ENCODE measurements at regions of chr13 and their contacts with region 1.

Region 1: GRCh38 chr13:45417790-45418534 is at the start of gene SLC25A30:
- DNase-seq: peak; percentile 86
- ATAC-seq: peak; percentile 91
- H3K4me3 ChIP-seq: peak within 1 kb of the TSS; percentile 78
- H3K27ac ChIP-seq: peak within 1 kb of the TSS; percentile 47
- H3K4me1 ChIP-seq: peaks cover 12% of the 10 kb centered on the region; the same call in 1 of the 2 replicates
- H3K27me3 ChIP-seq: no peaks in the 10 kb centered on the region
- CTCF ChIP-seq: no peak
- total RNA-seq, gene SLC25A30: 8.0 and 19.5 TPM in 2 replicates

Region 2: DNA sequence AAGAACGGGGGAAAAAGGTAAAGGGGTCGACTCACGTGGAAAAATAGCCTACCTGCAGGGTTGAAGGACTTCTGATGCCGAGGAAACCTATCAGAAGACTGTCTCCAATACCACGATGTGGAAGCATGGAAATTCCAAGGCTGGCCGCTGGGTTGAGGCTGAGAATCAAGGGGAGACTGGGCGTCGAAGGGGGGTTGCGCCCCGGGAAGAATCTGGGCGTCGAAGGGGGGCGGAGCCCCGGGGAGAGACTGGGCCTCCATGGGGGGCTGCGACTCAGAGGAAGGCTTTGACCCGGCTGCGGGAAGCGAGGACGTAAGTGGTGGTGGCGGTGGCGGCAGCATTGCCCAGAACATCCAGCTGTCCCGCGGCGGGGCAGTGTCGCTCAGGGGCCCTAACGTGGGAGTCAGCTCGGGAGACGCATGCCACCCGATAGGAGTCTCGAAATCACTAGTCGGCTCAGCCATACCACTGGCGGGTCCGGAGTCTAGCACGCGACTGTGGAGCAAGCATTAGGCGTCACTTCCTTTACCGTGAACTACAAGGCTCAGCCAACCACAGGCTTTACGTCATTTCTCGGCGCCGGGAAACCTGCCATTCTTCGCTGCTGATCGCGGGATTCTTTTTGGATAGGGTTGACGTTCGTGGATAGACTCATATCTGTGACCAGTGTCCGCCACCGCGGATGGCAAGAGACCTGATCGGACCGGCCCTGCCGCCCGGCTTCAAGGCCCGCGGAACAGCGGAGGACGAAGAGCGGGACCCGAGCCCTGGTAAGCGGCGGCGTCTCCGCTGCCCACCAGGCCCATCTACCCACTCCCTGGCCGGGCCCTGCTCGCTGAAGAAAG is 428.8 kb before region 1 on chr13 and contains the starts of genes GPALPP1 and NUFIP1:
- CTCF ChIA-PET with region 1: interaction called, 17 read pairs
- POLR2A ChIA-PET with region 1: no interaction called
- intact Hi-C with region 1: no loop called
- DNase-seq: peak; percentile 91
- ATAC-seq: peak; percentile 89
- H3K4me3 ChIP-seq: peak within 1 kb of the TSS; percentile 100
- H3K27ac ChIP-seq: peak within 1 kb of the TSS; percentile 53
- H3K4me1 ChIP-seq: peaks cover 12% of the 10 kb centered on the region
- H3K27me3 ChIP-seq: no peaks in the 10 kb centered on the region
- CTCF ChIP-seq: no peak
- total RNA-seq, gene GPALPP1: 5.0 and 17.0 TPM in 2 replicates
- total RNA-seq, gene NUFIP1: 2.5 and 4.0 TPM in 2 replicates

Region 3: GRCh38 chr13:45332036-45332830 is 85.7 kb before region 1 on chr13:
- CTCF ChIA-PET with region 1: no interaction called
- POLR2A ChIA-PET with region 1: interaction called, 20 read pairs
- intact Hi-C with region 1: no loop called
- DNase-seq: peak; percentile 76
- ATAC-seq: peak; percentile 58
- H3K4me3 ChIP-seq: no peak overlapping the region
- H3K27ac ChIP-seq: peak overlapping the region; percentile 71
- H3K4me1 ChIP-seq: peaks cover 58% of the 10 kb centered on the region
- H3K27me3 ChIP-seq: no peaks in the 10 kb centered on the region
- CTCF ChIP-seq: no peak

Region 4: DNA sequence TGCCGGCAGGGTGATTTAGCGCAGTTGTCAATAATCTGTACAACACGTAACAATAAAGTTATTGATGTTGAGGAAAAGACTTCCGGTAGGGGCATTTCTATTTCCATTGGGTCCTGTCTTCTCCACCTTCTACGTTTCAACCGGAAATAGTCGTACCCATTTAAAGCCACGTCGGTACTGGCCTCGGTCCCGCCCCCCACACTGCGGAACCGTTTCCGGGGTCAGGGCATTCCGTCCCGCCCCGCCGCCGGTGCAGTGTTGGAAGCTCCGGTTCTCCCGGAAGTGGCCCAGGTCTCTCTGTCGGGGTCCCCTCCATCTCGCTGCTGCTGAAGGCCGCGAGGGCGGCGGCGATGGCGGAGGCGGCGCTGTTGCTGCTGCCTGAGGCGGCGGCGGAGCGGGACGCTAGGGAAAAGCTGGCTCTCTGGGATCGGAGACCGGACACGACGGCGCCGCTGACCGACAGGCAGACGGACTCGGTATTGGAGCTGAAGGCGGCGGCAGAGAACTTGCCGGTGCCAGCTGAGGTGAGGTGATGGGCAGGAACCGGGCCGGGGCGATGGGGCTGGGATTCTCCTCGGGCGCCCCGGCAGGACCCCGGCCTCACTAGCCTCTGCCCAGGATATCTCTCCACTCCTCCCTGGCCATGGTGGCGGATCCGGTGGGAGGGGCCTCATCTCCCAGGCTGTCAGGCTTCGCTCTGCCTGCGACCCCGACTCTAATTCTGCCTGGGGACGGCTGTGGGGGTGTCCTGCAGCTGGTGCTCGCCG is 46.9 kb after region 1 on chr13 and contains the start of gene COG3:
- CTCF ChIA-PET with region 1: no interaction called
- POLR2A ChIA-PET with region 1: no interaction called
- intact Hi-C with region 1: loop called (anchors 2 kb)
- DNase-seq: peak; percentile 93
- ATAC-seq: peak; percentile 94
- H3K4me3 ChIP-seq: peak within 1 kb of the TSS; percentile 98
- H3K27ac ChIP-seq: peak within 1 kb of the TSS; percentile 82
- H3K4me1 ChIP-seq: peaks cover 10% of the 10 kb centered on the region
- H3K27me3 ChIP-seq: no peaks in the 10 kb centered on the region
- CTCF ChIP-seq: 0 out of 2 replicates have a peak, but pooled peaks have one; percentile 11
- total RNA-seq, gene COG3: 28.8 and 30.8 TPM in 2 replicates

Region 5: GRCh38 chr13:45521297-45521696 is 103.3 kb after region 1 on chr13:
- CTCF ChIA-PET with region 1: no interaction called
- POLR2A ChIA-PET with region 1: no interaction called
- intact Hi-C with region 1: no loop called
- DNase-seq: peak; percentile 79
- ATAC-seq: peak; percentile 97
- H3K4me3 ChIP-seq: no peak overlapping the region
- H3K27ac ChIP-seq: peak overlapping the region; percentile 52
- H3K4me1 ChIP-seq: peaks cover 48% of the 10 kb centered on the region
- H3K27me3 ChIP-seq: no peaks in the 10 kb centered on the region
- CTCF ChIP-seq: no peak